Heart right ventricle (tissue), 16 donors: ENCODE measurements at regions of chr7 and their contacts with region 1.

Region 1: DNA sequence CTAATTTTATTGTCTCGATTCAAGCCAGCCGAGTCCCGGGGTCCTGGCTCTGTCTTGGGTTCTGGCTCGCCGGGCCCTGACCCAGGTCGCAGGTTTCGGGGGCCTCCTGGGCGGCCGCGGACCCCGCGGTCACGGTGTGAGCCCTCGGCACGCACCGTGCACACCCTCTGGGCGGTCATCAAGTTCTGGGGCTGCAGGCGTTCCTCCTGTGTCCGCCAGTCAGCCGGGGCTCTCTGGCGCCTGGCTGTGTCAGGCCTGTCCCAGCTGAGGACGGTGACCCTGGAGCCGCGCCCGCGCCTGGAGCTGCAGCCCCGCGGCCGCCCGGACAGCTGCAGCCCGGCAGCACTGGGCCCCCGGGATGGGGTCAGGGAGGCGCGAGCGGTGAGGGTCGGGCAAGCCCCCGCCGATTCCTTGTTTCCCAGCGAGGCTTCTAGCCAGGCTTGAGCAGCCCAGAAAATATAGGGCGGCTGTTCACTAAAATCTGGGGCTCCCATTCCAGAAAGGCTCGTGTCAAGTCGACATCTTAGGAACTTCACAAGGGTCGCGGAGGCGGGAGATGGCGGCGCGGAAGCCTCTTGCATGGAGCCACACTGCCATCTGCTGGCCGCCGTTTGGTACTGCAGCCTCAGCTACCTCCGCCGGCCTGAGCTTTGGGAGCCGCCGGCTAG is 4.2 kb upstream of the HOXA7 start:
- DNase-seq: peak; percentile 78 to 80
- ATAC-seq: peak; percentile 73 to 89 (median 83)
- H3K4me3 ChIP-seq: peak overlapping the region; percentile 36 to 75 (median 58)
- H3K27ac ChIP-seq: peak overlapping the region in 1 of 10 donors; percentile 15
- H3K4me1 ChIP-seq: peaks cover 8 to 77% (median 31%) of the 10 kb centered on the region in 9 donors
- H3K27me3 ChIP-seq: peaks cover 74 to 100% (median 100%) of the 10 kb centered on the region in 7 donors
- CTCF ChIP-seq: peak; percentile 99 to 100 (median 100)

Region 2: DNA sequence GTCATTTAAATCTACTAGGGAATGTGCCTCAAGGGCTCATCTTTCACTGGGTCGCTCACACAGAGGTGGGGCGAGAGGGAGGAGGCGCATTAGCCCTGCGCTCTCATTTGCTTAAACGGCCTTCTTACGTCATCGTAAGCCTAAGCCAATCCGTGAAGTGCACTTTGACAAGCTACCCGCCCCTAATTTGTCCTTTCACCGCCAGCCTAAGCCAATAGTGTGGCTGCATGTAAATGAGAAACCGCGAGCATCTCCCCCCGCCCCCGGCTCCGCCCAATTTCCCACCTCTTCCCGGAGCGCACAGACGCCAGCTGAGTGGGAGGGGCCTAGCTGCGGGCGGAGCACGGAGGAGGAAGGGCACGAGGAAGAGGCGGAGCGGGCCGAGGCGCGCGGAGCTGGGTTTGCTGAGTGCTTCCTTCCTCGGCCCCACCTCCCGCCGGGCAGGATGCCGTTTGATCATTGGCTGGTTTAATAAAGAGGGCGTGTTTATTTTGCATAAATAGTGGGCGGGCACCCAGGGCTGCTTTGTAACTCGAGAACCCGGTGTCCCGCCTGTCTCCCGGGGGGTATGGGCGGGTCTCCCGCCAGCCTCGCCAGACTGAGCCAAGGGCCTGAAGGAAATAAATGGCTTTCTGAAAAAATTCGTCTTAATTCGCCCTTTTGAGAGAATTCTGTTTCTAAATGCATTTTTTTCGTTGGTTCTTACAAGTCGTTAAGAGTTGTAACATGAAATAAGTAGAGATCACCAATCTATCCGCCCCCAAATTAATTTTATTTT is 1298.2 kb before region 1 on chr7:
- intact Hi-C with region 1: loop called in 3 of 10 experiments (anchors 10 kb)
- DNase-seq: peak; percentile 76 to 78
- ATAC-seq: peak; percentile 78 to 95 (median 90)
- H3K4me3 ChIP-seq: peak overlapping the region in 2 of 10 donors; percentile 2 to 22
- H3K27ac ChIP-seq: no peak overlapping the region
- H3K4me1 ChIP-seq: peaks cover 0 to 31% (median 14%) of the 10 kb centered on the region in 9 donors
- H3K27me3 ChIP-seq: peaks cover 53 to 100% (median 100%) of the 10 kb centered on the region in 7 donors
- CTCF ChIP-seq: no peak

Region 3: GRCh38 chr7:25886387-25887240 is 1274.1 kb before region 1 on chr7:
- intact Hi-C with region 1: loop called in 5 of 10 experiments (anchors 10 kb)
- DNase-seq: no peak
- ATAC-seq: peak in 3 of 8 donors; percentile 55 to 72 (median 64)
- H3K4me3 ChIP-seq: no peak overlapping the region
- H3K27ac ChIP-seq: no peak overlapping the region
- H3K4me1 ChIP-seq: peaks cover 0 to 5% (median 0%) of the 10 kb centered on the region in 9 donors
- H3K27me3 ChIP-seq: peaks cover 6 to 82% (median 74%) of the 10 kb centered on the region in 7 donors
- CTCF ChIP-seq: no peak

Region 4: DNA sequence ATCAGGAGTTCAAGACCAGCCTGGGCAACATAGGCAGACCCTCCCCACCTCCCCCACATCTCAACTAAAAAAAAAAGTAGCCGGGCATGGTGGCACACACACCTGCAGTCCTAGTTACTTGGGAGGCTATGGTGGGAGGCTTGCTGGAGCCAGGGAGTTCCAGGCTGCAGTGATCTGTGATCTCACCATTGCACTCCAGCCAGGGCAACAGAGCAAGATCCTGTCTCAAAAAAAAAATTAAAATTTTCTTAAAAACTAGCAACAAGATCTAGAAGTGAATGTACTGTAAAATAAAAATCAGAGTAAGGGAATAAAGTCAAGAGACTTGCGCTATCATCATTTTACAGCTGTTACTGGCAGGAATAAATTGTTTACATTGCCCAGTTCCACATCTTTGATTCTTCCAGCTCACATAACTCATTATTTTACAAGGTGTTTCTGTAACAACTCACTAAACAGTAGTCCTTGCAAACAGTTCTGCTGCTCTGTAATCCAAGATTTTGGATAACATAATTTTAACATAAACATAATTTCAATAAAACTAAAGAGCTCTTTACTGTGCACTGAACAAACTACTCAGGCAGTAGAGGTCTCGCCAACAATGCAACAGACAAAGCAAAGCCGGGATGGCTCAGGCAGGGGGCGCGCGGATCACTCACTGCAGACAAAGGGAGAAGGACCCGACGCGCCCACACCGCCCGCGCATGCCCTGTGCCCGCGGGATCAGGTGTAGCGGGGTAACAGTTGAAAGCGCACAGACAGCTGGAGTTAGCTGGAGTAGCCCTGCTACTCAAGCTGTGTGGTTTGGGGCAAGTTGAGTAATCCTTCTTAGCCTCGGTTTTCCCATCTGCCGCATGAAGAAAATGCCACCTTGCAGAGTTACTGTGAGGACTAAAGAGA is 1082.0 kb before region 1 on chr7:
- intact Hi-C with region 1: loop called in 1 of 10 experiments (anchors 10 kb)
- DNase-seq: peak; percentile 35 to 55
- ATAC-seq: peak in 7 of 8 donors; percentile 65 to 83 (median 79)
- H3K4me3 ChIP-seq: no peak overlapping the region
- H3K27ac ChIP-seq: no peak overlapping the region
- H3K4me1 ChIP-seq: peaks cover 0 to 7% (median 0%) of the 10 kb centered on the region in 9 donors
- H3K27me3 ChIP-seq: peaks cover 0 to 93% (median 82%) of the 10 kb centered on the region in 7 donors
- CTCF ChIP-seq: peak in 7 of 9 donors; percentile 29 to 54 (median 40)

Region 5: GRCh38 chr7:26376175-26376917 is 784.3 kb before region 1 on chr7:
- intact Hi-C with region 1: loop called in 6 of 10 experiments (anchors 2 to 5 kb)
- DNase-seq: peak in 1 of 2 donors; percentile 21
- ATAC-seq: peak; percentile 33 to 73 (median 40)
- H3K4me3 ChIP-seq: peak overlapping the region; percentile 9 to 52 (median 38)
- H3K27ac ChIP-seq: no peak overlapping the region
- H3K4me1 ChIP-seq: peaks cover 2 to 14% (median 6%) of the 10 kb centered on the region in 9 donors
- H3K27me3 ChIP-seq: peaks cover 29 to 98% (median 95%) of the 10 kb centered on the region in 7 donors
- CTCF ChIP-seq: no peak

Region 6: GRCh38 chr7:26686448-26686981 is 474.2 kb before region 1 on chr7:
- intact Hi-C with region 1: loop called in 7 of 10 experiments (anchors 2 to 5 kb)
- DNase-seq: no peak
- ATAC-seq: peak in 2 of 8 donors; percentile 39 to 50
- H3K4me3 ChIP-seq: no peak overlapping the region
- H3K27ac ChIP-seq: no peak overlapping the region
- H3K4me1 ChIP-seq: peaks cover 0 to 12% (median 0%) of the 10 kb centered on the region in 9 donors
- H3K27me3 ChIP-seq: peaks cover 0 to 65% (median 18%) of the 10 kb centered on the region in 7 donors
- CTCF ChIP-seq: peak; percentile 59 to 79 (median 73)

Region 7: DNA sequence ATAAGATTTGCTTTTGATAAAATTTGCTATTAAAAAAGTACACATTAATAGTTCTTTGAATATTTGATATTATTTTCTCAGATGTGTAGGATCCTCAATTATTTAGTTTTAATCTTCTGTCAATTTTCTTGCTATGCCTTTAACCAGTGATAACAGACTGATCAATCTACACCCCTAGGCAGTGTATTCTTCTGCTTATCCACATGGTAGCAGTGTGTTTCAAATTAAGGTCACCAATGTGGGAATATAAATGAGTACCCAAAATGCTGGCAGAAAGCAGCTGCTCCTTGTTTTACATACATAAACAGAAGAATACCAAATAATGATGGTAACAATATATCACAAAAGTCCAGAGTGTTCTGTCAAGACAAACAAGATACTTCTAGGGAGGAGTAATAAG is 383.3 kb before region 1 on chr7:
- intact Hi-C with region 1: no loop called
- DNase-seq: no peak
- ATAC-seq: no peak
- H3K4me3 ChIP-seq: no peak overlapping the region
- H3K27ac ChIP-seq: no peak overlapping the region
- H3K4me1 ChIP-seq: no peaks in the 10 kb centered on the region
- H3K27me3 ChIP-seq: peaks cover 0 to 5% (median 0%) of the 10 kb centered on the region in 7 donors
- CTCF ChIP-seq: no peak

Region 8: DNA sequence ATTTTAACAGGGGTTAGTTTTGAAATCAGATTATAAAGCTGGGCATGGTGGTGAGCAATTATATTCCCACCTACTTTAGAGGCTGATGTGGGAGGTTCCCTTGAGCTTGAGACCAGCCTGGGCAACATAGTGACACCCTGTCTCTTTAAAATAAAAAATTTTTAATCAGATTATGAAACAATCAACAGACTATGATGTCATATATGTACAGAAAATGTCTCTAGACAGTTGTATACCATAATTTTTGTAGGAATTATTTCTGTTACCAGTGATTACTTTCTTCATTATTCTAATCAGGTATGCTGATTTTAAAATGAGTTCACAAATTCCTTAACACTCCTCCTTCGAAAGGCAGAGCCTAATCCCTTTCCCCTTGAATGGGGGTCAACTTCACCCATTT is 355.6 kb before region 1 on chr7:
- intact Hi-C with region 1: no loop called
- DNase-seq: no peak
- ATAC-seq: no peak
- H3K4me3 ChIP-seq: no peak overlapping the region
- H3K27ac ChIP-seq: no peak overlapping the region
- H3K4me1 ChIP-seq: no peaks in the 10 kb centered on the region
- H3K27me3 ChIP-seq: no peaks in the 10 kb centered on the region
- CTCF ChIP-seq: no peak

Region 9: DNA sequence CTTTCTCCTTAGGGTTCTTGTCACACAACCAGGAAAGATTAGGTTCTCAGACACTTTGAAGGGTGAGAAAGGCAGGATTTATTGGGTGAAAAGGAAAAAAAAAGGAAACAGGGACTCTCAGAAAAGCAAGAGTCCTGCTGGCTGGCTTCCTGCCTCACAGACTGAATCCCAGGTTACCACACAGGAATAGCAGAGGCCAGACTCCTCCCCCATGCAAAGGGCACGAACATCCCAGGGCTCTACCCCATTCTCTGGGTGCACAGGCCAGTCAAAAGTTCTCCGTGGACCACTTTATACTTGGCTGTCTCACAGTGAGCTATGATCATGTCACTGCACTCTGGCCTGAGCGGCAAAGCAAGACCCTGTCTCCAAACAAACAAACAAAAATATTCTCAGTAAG is 107.5 kb before region 1 on chr7:
- intact Hi-C with region 1: no loop called
- DNase-seq: no peak
- ATAC-seq: no peak
- H3K4me3 ChIP-seq: no peak overlapping the region
- H3K27ac ChIP-seq: no peak overlapping the region
- H3K4me1 ChIP-seq: no peaks in the 10 kb centered on the region
- H3K27me3 ChIP-seq: peaks cover 0 to 30% (median 7%) of the 10 kb centered on the region in 7 donors
- CTCF ChIP-seq: no peak

Region 10: DNA sequence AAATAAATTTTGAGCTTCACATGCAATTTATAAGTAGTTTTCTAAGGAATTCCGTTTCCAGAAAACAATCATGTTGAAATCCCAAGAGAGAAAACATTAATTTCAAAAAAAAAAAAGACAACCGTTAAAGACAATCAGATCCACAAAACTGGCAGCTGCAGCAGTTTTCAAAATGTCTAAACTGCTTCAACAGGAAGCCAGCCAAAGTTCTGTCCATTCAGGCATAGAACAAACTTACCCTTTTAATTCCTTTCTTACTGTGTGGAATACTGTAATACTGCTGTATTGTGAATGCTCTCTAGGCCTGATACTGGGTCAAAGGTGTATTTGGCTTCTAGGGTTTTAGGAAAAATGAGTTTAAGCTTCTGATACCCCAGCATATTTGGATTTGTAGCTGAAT is 96.5 kb before region 1 on chr7:
- intact Hi-C with region 1: no loop called
- DNase-seq: no peak
- ATAC-seq: no peak
- H3K4me3 ChIP-seq: no peak overlapping the region
- H3K27ac ChIP-seq: no peak overlapping the region
- H3K4me1 ChIP-seq: no peaks in the 10 kb centered on the region
- H3K27me3 ChIP-seq: peaks cover 0 to 35% (median 16%) of the 10 kb centered on the region in 7 donors
- CTCF ChIP-seq: no peak